ENCODE measurements at regions of chr16 and their contacts with region 1.

Region 1: GRCh38 chr16:11915644-11916523 is at the start of gene GSPT1:
- DNase-seq: peak; percentile 99
- H3K4me3 Mint-ChIP-seq: peak within 1 kb of the TSS; percentile 91
- H3K27ac Mint-ChIP-seq: peak within 1 kb of the TSS; percentile 94
- H3K4me1 Mint-ChIP-seq: peaks cover 32% of the 10 kb centered on the region
- H3K27me3 Mint-ChIP-seq: peaks cover 8% of the 10 kb centered on the region
- total RNA-seq, gene GSPT1: 207 and 214 TPM in 2 replicates

Region 2: GRCh38 chr16:10385725-10386516 is 1530.0 kb before region 1 on chr16 and contains the start of gene ATF7IP2:
- intact Hi-C with region 1: loop called (anchors 5 kb)
- DNase-seq: peak; percentile 87
- H3K4me3 Mint-ChIP-seq: peak within 1 kb of the TSS; percentile 97
- H3K27ac Mint-ChIP-seq: peak within 1 kb of the TSS; percentile 97
- H3K4me1 Mint-ChIP-seq: peaks cover 58% of the 10 kb centered on the region
- H3K27me3 Mint-ChIP-seq: no peaks in the 10 kb centered on the region
- total RNA-seq, gene ATF7IP2: 25.9 and 28.7 TPM in 2 replicates

Region 3: GRCh38 chr16:11312718-11313492 is 603.0 kb before region 1 on chr16:
- intact Hi-C with region 1: no loop called
- DNase-seq: peak; percentile 38
- H3K4me3 Mint-ChIP-seq: peak overlapping the region; percentile 27
- H3K27ac Mint-ChIP-seq: peak overlapping the region; percentile 57
- H3K4me1 Mint-ChIP-seq: peaks cover 61% of the 10 kb centered on the region
- H3K27me3 Mint-ChIP-seq: peaks cover 3% of the 10 kb centered on the region

Region 4: GRCh38 chr16:11727796-11728543 is 187.9 kb before region 1 on chr16:
- intact Hi-C with region 1: no loop called
- DNase-seq: no peak
- H3K4me3 Mint-ChIP-seq: no peak overlapping the region
- H3K27ac Mint-ChIP-seq: peak overlapping the region; percentile 58
- H3K4me1 Mint-ChIP-seq: peaks cover 53% of the 10 kb centered on the region
- H3K27me3 Mint-ChIP-seq: no peaks in the 10 kb centered on the region

Region 5: GRCh38 chr16:11797166-11797956 is 118.5 kb before region 1 on chr16 and contains the start of gene ZC3H7A:
- intact Hi-C with region 1: loop called (anchors 1 kb)
- DNase-seq: peak; percentile 95
- H3K4me3 Mint-ChIP-seq: peak within 1 kb of the TSS; percentile 92
- H3K27ac Mint-ChIP-seq: peak within 1 kb of the TSS; percentile 94
- H3K4me1 Mint-ChIP-seq: peaks cover 75% of the 10 kb centered on the region
- H3K27me3 Mint-ChIP-seq: no peaks in the 10 kb centered on the region
- total RNA-seq, gene ZC3H7A: 71.0 and 78.9 TPM in 2 replicates

Region 6: GRCh38 chr16:11851294-11852091 is 64.4 kb before region 1 on chr16 and contains the start of gene RSL1D1:
- intact Hi-C with region 1: loop called (anchors 1 kb)
- DNase-seq: peak; percentile 95
- H3K4me3 Mint-ChIP-seq: peak within 1 kb of the TSS; percentile 99
- H3K27ac Mint-ChIP-seq: peak within 1 kb of the TSS; percentile 97
- H3K4me1 Mint-ChIP-seq: peaks cover 44% of the 10 kb centered on the region
- H3K27me3 Mint-ChIP-seq: no peaks in the 10 kb centered on the region
- total RNA-seq, gene RSL1D1: 345 and 369 TPM in 2 replicates

Region 7: GRCh38 chr16:11977376-11978041 is 61.6 kb after region 1 on chr16:
- intact Hi-C with region 1: loop called (anchors 1 kb)
- DNase-seq: no peak
- H3K4me3 Mint-ChIP-seq: peak overlapping the region; percentile 96
- H3K27ac Mint-ChIP-seq: peak overlapping the region; percentile 84
- H3K4me1 Mint-ChIP-seq: peaks cover 30% of the 10 kb centered on the region
- H3K27me3 Mint-ChIP-seq: peaks cover 2% of the 10 kb centered on the region

Region 8: GRCh38 chr16:12803203-12804097 is 887.6 kb after region 1 on chr16 and contains the start of gene CPPED1:
- intact Hi-C with region 1: loop called (anchors 2 kb)
- DNase-seq: peak; percentile 89
- H3K4me3 Mint-ChIP-seq: peak within 1 kb of the TSS; percentile 93
- H3K27ac Mint-ChIP-seq: peak within 1 kb of the TSS; percentile 91
- H3K4me1 Mint-ChIP-seq: peaks cover 26% of the 10 kb centered on the region
- H3K27me3 Mint-ChIP-seq: no peaks in the 10 kb centered on the region
- total RNA-seq, gene CPPED1: 5.0 and 5.4 TPM in 2 replicates